Mammary epithelial cell (primary cell): ENCODE measurements at regions of chr17 and their contacts with region 1.

Region 1: DNA sequence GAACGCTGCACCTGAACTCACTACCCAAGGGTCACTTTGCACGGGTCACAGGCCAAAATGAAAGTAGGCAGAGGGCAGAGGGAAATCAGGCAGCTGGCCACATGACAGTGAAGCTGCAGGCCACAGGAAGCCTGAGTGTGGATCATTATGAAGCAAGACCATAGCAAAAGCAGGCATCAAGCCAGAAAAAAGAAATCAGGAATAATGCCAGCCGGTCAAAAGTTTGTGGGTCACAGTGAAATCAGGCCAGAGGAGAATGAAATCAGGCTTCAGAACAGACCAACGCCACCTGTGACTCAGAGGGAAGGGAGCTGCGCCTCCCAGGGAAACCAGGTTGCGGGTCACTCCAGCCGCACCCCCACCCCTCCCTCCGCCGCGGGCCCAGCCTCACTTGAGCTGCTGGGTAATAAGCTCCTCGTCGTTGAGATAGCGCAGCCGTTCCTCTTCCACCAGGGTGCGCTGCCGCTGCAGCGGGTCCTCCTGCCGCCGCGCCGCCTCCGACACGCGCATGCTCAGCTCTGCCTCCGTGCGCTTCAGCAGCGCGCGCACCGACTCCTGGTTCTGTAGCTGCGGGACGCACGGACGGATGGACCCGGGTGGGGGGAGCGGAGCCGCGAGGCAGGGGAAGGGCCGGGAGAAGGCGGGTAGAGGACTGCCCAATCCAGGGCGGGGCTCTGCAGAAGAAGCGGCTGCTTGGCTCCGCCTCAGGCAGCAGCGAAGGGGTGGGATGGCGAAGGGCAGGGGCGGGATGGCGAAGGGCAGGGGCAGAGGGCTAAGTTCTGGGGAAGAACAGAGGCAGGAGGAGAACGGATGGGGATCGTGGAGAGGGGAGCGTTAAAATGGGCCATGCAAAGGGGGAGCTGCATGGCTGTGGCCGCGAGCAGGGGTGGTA is 47.7 kb downstream of the SRCIN1 start:
- DNase-seq: peak; percentile 95
- H3K4me3 ChIP-seq: peak overlapping the region; percentile 41 to 53 (median 48)
- H3K27ac ChIP-seq: peak overlapping the region; percentile 8
- H3K4me1 ChIP-seq: peaks cover 58% of the 10 kb centered on the region
- H3K27me3 ChIP-seq: no peaks in the 10 kb centered on the region
- CTCF ChIP-seq: peak; percentile 87 to 98

Region 2: GRCh38 chr17:38509008-38509771 is 48.9 kb before region 1 on chr17:
- CTCF ChIA-PET with region 1: interaction called, 16 read pairs
- dilution Hi-C with region 1: no loop called
- in situ Hi-C with region 1: no loop called
- intact Hi-C with region 1: no loop called
- DNase-seq: peak; percentile 49
- H3K4me3 ChIP-seq: no peak overlapping the region
- H3K27ac ChIP-seq: no peak overlapping the region
- H3K4me1 ChIP-seq: peaks cover 10% of the 10 kb centered on the region
- H3K27me3 ChIP-seq: no peaks in the 10 kb centered on the region
- CTCF ChIP-seq: peak; percentile 59 to 70

Region 3: DNA sequence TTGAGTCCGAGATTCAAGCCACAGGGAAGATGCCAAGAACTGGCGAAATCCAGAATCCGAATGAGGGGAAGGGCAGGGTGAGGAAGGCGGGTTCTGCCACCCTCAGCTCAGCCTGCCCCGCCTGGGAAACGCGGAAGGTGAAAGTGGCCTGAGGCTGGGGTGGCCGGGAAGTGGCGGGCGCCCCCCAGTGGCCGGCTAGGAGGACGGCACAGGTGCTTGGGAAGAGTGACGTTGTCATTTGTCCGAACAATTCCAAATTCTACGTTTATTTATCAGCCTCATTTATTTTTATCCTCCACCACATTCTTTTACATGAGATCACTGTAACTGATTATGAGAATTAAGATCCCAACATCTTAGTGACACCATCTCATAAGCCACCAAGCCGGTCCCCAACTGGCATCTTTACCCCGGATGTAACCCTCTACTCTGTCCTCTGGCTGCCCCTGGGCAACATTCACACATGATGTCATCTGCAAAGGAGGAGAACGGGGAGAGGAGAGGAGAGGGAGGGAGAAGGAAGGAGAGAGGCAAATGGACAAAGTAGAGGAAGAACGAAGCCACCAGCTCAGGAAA is 26.4 kb after region 1 on chr17:
- CTCF ChIA-PET with region 1: interaction called, 51 read pairs
- dilution Hi-C with region 1: no loop called
- in situ Hi-C with region 1: no loop called
- intact Hi-C with region 1: loop called (anchors 1 kb)
- DNase-seq: peak; percentile 54
- H3K4me3 ChIP-seq: no peak overlapping the region
- H3K27ac ChIP-seq: no peak overlapping the region
- H3K4me1 ChIP-seq: peaks cover 23% of the 10 kb centered on the region
- H3K27me3 ChIP-seq: no peaks in the 10 kb centered on the region
- CTCF ChIP-seq: peak; percentile 87 to 97

Region 4: GRCh38 chr17:38605888-38606645 is 48.0 kb after region 1 on chr17 and contains the start of gene SRCIN1:
- CTCF ChIA-PET with region 1: interaction called, 16 read pairs
- dilution Hi-C with region 1: no loop called
- in situ Hi-C with region 1: no loop called
- intact Hi-C with region 1: no loop called
- DNase-seq: peak; percentile 16
- H3K4me3 ChIP-seq: peak within 1 kb of the TSS; percentile 26 to 56 (median 48)
- H3K27ac ChIP-seq: no peak within 1 kb of the TSS
- H3K4me1 ChIP-seq: peaks cover 11% of the 10 kb centered on the region
- H3K27me3 ChIP-seq: peaks cover 11% of the 10 kb centered on the region
- CTCF ChIP-seq: peak; percentile 63 to 84
- total RNA-seq, gene SRCIN1: 0.17 to 4.2 TPM

Region 5: GRCh38 chr17:38617011-38617867 is 59.2 kb after region 1 on chr17:
- CTCF ChIA-PET with region 1: no interaction called
- dilution Hi-C with region 1: loop called (anchors 5 kb)
- in situ Hi-C with region 1: no loop called
- intact Hi-C with region 1: no loop called
- DNase-seq: no peak
- H3K4me3 ChIP-seq: no peak overlapping the region
- H3K27ac ChIP-seq: no peak overlapping the region
- H3K4me1 ChIP-seq: no peaks in the 10 kb centered on the region
- H3K27me3 ChIP-seq: peaks cover 4% of the 10 kb centered on the region
- CTCF ChIP-seq: no peak

Region 6: GRCh38 chr17:38719289-38719942 is 161.3 kb after region 1 on chr17:
- CTCF ChIA-PET with region 1: no interaction called
- dilution Hi-C with region 1: no loop called
- in situ Hi-C with region 1: no loop called
- intact Hi-C with region 1: no loop called
- DNase-seq: no peak
- H3K4me3 ChIP-seq: no peak overlapping the region
- H3K27ac ChIP-seq: no peak overlapping the region
- H3K4me1 ChIP-seq: no peaks in the 10 kb centered on the region
- H3K27me3 ChIP-seq: no peaks in the 10 kb centered on the region
- CTCF ChIP-seq: no peak

Region 7: DNA sequence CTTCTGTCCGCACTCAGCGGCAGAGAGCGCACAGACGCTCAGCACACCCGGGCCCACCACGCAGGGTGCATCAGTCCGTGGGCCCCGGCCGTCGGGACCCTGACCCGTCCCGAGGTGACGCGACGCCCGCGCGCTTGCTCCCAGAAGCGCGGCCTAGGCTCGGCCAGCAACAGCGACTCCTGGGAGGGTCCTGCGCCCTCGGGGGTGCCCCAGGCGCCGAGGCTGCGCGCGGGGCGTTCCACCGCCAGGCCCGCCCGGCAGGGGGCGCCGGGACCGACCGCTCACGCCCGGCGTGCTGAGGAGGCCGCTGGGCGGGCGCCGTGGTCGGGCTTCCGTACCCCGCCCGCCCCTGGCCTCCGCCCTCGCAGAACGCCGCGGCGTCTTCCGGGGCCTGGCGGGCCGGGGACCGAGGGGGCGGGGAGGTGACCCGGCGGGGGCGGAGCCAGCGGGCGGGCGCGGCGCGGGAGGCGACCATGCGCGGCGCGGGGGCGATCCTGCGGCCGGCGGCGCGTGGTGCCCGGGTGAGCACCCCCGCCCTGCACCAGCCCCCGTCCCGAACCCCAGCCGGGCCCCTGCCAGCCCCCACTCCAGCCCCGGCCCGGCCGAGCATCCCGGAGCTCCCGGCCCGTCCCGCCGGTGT is 171.9 kb after region 1 on chr17 and contains the start of gene CISD3:
- CTCF ChIA-PET with region 1: no interaction called
- dilution Hi-C with region 1: no loop called
- in situ Hi-C with region 1: no loop called
- intact Hi-C with region 1: loop called (anchors 10 kb)
- DNase-seq: peak; percentile 74
- H3K4me3 ChIP-seq: peak within 1 kb of the TSS; percentile 65 to 79 (median 68)
- H3K27ac ChIP-seq: peak within 1 kb of the TSS; percentile 41
- H3K4me1 ChIP-seq: peaks cover 12% of the 10 kb centered on the region
- H3K27me3 ChIP-seq: no peaks in the 10 kb centered on the region
- CTCF ChIP-seq: peak; percentile 40 to 44
- total RNA-seq, gene CISD3: 3.3 to 30.4 TPM